ENCODE measurements at regions of chr4 and their contacts with region 1.

Region 1: DNA sequence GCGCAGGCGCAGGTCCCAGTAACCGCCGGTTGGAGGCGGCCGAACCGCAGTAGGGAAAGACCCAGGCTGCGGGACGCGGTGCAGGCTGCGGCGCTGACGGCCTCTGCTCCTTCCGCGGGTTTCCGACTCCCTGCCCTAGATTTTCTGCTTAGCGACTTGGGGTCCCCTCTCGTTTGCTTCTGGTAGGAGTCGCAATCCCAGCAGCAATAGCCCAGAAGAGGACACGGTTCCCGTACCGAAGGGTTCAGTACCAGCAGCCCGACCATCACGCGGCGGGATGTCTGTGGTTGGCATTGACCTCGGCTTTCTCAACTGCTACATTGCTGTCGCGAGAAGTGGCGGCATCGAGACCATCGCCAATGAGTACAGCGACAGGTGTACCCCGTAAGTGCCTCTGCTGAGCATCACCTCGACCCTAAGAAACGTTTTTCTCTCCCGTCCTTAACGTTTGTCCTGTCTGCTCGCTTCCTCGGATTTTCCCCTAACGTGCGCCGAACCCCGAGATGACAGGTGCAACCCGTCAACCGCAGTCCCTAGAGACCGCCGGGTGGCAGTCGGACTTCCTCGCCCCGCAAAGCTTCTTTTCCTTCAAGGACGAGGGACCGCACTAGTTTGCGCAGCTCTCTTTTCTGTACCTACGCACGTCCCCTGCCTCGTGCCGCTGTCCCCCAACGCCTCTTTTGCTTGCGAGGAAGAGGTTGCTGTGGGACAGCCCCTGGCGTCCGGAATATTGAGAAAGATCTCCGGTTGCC is at the start of gene HSPA4L:
- DNase-seq: peak; percentile 65 to 72
- ATAC-seq: peak; percentile 80 to 91
- H3K4me3 ChIP-seq: peak within 1 kb of the TSS; percentile 83
- H3K27ac ChIP-seq: peak within 1 kb of the TSS; percentile 84 to 96
- H3K4me1 ChIP-seq: no peaks in the 10 kb centered on the region
- CTCF ChIP-seq: no peak; the same call in 2 of the 3 replicates
- EP300 ChIP-seq: no peak
- POLR2A ChIP-seq: peak; percentile 78
- RAD21 ChIP-seq: peak in 1 of 2 experiments; percentile 35; a peak in 2 of 5 replicates
- polyA plus RNA-seq, gene HSPA4L: 9.2 and 12.1 TPM in 2 replicates

Region 2: DNA sequence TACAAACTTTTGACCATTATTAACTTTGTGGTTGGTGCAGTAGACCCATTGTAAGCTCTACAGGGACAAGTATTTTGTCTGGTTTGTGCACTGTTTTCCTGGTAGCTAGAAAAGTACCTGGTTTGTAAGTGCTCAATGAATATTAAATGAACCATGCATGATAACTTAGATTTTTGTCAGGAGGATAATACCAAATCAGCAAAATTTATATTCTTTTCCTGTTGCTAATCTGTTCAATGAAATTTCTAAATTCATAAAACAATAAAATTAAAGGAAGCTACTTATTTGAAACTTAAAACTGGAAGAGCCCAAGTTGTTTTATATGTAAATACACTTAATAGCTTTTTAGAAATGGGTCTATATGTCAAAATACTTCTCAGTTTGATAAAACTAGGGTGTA is 17.3 kb after region 1 on chr4:
- CTCF ChIA-PET with region 1: interaction called, 10 read pairs
- POLR2A ChIA-PET with region 1: interaction called, 5 read pairs
- DNase-seq: no peak
- ATAC-seq: no peak
- H3K4me3 ChIP-seq: no peak overlapping the region
- H3K27ac ChIP-seq: no peak overlapping the region
- H3K4me1 ChIP-seq: no peaks in the 10 kb centered on the region
- CTCF ChIP-seq: no peak
- EP300 ChIP-seq: no peak
- POLR2A ChIP-seq: no peak
- RAD21 ChIP-seq: no peak